MCF 10A (cell line): ENCODE measurements at regions of chr18 and their contacts with region 1.

Region 1: DNA sequence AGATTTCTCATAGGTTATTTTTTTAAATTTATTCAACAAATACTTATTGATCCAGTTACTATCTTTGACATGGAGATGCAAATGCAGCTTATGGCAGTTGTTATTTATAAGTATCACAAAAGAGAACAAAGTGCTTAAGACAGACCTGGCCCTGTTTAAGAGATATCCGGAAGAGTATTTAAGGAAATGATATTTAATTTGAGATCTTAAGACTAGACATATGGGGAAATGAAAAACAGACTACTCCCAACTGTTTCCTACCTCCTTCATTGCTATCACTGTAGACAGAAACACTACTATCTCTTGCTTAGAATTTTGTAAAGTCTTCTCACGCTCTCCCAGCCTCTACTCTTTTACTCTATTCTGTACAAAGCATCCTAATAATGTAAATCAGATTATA is 36.0 kb downstream of the RPRD1A start:
- DNase-seq: no peak
- H3K4me3 Mint-ChIP-seq: no peak overlapping the region
- H3K27ac Mint-ChIP-seq: no peak overlapping the region
- H3K4me1 Mint-ChIP-seq: peaks cover 31% of the 10 kb centered on the region
- H3K27me3 Mint-ChIP-seq: no peaks in the 10 kb centered on the region
- CTCF ChIP-seq: no peak

Region 2: GRCh38 chr18:36086186-36086585 is 54.8 kb after region 1 on chr18:
- CTCF ChIA-PET with region 1: interaction called, 4 read pairs
- POLR2A ChIA-PET with region 1: no interaction called
- intact Hi-C with region 1: loop called (anchors 5 kb)
- DNase-seq: no peak
- H3K4me3 Mint-ChIP-seq: no peak overlapping the region
- H3K27ac Mint-ChIP-seq: no peak overlapping the region
- H3K4me1 Mint-ChIP-seq: peaks cover 11% of the 10 kb centered on the region
- H3K27me3 Mint-ChIP-seq: no peaks in the 10 kb centered on the region
- CTCF ChIP-seq: no peak